ENCODE measurements at regions of chr3 and their contacts with region 1.

Region 1: DNA sequence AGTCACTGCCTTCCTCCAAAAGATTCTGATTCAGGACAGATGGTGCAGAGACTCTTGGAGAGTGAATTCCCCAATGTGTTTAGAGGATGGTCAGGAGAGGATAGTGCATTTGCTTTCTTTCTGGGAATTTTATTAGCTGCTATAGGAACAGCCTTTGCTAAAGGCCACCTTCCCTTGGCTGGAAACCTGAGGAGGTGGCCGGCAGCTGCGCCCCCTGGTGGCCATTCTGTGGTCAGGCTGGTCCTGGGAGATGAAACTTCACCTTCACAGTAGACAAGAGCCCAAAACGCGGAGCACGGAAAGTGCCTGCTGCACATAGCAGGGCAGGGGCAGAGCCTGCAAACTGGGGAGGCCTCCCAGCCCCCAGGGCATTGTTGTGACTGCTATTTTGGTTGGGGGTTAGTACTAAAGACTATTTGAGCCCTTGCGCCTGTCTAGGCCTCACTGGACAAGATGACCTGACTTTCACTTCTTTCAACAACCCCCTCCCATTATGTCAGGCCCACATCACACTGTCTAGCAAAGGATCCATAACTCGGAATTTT is 34.3 kb downstream of the SEC22C start:
- DNase-seq: peak; percentile 73 to 91
- ATAC-seq: peak; percentile 71
- H3K4me3 ChIP-seq: no peak overlapping the region
- H3K27ac ChIP-seq: no peak overlapping the region
- H3K4me1 ChIP-seq: peaks cover 0 to 3% of the 10 kb centered on the region in 2 donors
- H3K27me3 ChIP-seq: no peaks in the 10 kb centered on the region

Region 2: DNA sequence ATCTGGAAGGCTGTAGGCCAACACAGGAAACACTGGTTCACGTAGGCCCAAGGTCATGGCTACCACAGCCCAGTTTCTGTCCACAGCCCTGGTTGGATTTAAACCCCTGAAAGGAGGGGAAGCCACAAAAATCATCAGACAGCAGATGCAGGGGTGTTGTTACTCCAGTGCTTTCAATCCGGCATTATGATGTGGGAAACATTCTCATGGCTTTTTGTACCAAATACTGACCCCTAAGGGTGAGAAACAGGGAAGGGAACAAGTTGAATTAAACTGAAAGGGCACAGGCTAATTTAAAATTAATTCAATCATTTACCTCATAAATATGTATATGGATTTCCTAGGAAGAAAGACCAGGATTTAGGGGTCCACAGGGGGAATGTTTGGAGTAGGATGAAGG is 972.6 kb before region 1 on chr3:
- intact Hi-C with region 1: no loop called
- DNase-seq: no peak
- ATAC-seq: no peak
- H3K4me3 ChIP-seq: no peak overlapping the region
- H3K27ac ChIP-seq: no peak overlapping the region
- H3K4me1 ChIP-seq: peaks cover 0 to 2% of the 10 kb centered on the region in 2 donors
- H3K27me3 ChIP-seq: no peaks in the 10 kb centered on the region

Region 3: GRCh38 chr3:42229942-42230688 is 317.4 kb before region 1 on chr3:
- intact Hi-C with region 1: loop called in 1 of 2 experiments (anchors 10 kb)
- DNase-seq: no peak
- ATAC-seq: peak; percentile 56
- H3K4me3 ChIP-seq: peak overlapping the region in 1 of 2 donors; percentile 10
- H3K27ac ChIP-seq: no peak overlapping the region
- H3K4me1 ChIP-seq: no peaks in the 10 kb centered on the region
- H3K27me3 ChIP-seq: peaks cover 0 to 2% of the 10 kb centered on the region in 2 donors

Region 4: GRCh38 chr3:42247576-42248027 is 299.9 kb before region 1 on chr3:
- intact Hi-C with region 1: loop called in 1 of 2 experiments (anchors 5 kb)
- DNase-seq: no peak
- ATAC-seq: no peak
- H3K4me3 ChIP-seq: no peak overlapping the region
- H3K27ac ChIP-seq: no peak overlapping the region
- H3K4me1 ChIP-seq: no peaks in the 10 kb centered on the region
- H3K27me3 ChIP-seq: no peaks in the 10 kb centered on the region

Region 5: DNA sequence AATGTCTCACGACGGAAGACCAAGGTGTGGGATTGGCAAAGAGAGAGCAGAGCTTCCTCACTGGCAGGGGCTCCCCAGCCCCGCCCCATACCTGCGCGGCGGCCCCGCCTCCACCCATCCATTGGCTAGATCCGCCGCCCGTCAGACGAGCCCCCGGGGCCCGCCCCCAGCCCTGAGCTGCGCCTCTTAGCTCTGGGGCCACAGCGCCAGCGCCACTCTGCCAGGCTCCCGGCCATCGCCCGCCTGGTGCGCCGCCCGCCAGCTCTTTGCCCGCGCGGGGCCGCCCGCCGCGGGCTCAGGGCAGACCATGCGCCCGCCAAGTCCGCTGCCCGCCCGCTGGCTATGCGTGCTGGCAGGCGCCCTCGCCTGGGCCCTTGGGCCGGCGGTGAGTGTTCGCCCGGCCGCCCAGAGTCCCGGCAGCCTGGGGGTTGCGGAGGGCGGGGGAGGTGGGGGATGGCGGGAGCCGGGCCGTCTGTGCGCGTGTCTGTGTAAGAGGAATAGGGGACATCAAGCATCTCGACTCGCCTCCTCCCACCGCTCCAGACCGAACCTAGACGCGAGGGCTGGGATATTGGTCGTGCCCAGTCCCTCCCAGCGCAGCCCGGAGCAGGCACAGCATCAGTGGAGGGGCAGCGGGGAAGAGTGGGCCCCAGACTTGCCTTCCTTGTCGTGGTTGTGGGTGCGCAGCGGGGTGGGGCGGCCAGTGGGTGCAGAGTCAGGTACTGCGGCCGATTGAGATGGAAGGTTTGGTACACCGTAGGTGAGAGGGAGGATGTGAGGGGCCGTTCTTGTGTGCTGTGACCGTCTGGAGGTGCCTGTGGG is 44.8 kb before region 1 on chr3 and contains the start of gene VIPR1:
- intact Hi-C with region 1: loop called (anchors 2 to 5 kb)
- DNase-seq: peak; percentile 87 to 91
- ATAC-seq: peak; percentile 83
- H3K4me3 ChIP-seq: peak within 1 kb of the TSS in 1 of 2 donors; percentile 15
- H3K27ac ChIP-seq: no peak within 1 kb of the TSS
- H3K4me1 ChIP-seq: no peaks in the 10 kb centered on the region
- H3K27me3 ChIP-seq: no peaks in the 10 kb centered on the region
- total RNA-seq, gene VIPR1: 3.2 to 7.6 TPM

Region 6: GRCh38 chr3:43286115-43286840 is 738.8 kb after region 1 on chr3 and contains the start of gene SNRK:
- intact Hi-C with region 1: no loop called
- DNase-seq: peak; percentile 89 to 97
- ATAC-seq: peak; percentile 96
- H3K4me3 ChIP-seq: peak within 1 kb of the TSS; percentile 93 to 95
- H3K27ac ChIP-seq: peak within 1 kb of the TSS; percentile 9 to 59
- H3K4me1 ChIP-seq: peaks cover 3 to 7% of the 10 kb centered on the region in 2 donors
- H3K27me3 ChIP-seq: no peaks in the 10 kb centered on the region
- total RNA-seq, gene SNRK: 66.9 to 95.1 TPM

Measured in aorta (tissue), 5 donors.